ENCODE measurements at regions of chr1 and their contacts with region 1.

Region 1: GRCh38 chr1:50368179-50369012 is 54.8 kb downstream of the DMRTA2 start:
- DNase-seq: no peak
- ATAC-seq: no peak
- H3K4me3 ChIP-seq: no peak overlapping the region
- H3K27ac ChIP-seq: no peak overlapping the region
- H3K4me1 ChIP-seq: no peaks in the 10 kb centered on the region
- H3K27me3 ChIP-seq: no peaks in the 10 kb centered on the region

Region 2: DNA sequence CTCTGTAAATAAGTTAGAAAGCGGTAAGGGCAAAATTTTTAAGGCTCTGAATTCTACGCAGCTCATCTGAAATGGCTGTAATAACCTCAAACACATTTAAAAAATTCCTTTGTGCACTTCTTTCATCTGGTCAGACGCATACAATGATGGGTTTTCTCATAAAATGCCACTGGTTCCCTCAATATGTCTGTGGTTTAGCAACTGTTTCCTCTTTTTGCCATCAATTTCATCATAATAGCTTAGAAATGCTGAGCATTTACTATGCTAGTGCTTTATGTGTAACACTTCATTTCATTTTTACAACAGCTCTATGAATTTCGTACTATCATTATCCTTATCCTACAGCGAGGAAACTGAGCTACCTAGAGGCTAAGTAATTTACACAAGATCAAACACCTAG is 90.1 kb after region 1 on chr1:
- intact Hi-C with region 1: no loop called
- DNase-seq: no peak
- ATAC-seq: no peak
- H3K4me3 ChIP-seq: no peak overlapping the region
- H3K27ac ChIP-seq: no peak overlapping the region
- H3K4me1 ChIP-seq: no peaks in the 10 kb centered on the region
- H3K27me3 ChIP-seq: no peaks in the 10 kb centered on the region

Region 3: DNA sequence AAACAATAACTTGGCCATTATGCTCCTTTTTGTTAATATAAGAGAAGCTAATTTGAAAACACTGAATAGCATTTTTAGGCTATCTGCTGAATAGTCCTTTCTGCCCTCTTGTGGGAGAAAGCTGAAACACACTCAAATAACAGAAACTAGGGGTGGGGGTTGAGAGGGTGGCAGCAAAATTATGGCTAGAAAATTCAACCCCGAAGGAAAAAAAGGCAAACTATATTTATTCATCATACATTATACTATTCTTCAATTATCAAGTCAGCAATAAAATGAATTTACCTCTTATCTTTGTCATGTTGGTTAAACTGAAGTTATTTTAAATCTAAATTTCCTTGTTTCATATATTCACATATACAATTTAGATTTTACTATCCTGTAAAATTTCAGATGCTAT is 335.7 kb after region 1 on chr1:
- intact Hi-C with region 1: loop called in 1 of 2 experiments (anchors 5 kb)
- DNase-seq: no peak
- ATAC-seq: no peak
- H3K4me3 ChIP-seq: no peak overlapping the region
- H3K27ac ChIP-seq: no peak overlapping the region
- H3K4me1 ChIP-seq: peaks cover 0 to 4% of the 10 kb centered on the region in 2 donors
- H3K27me3 ChIP-seq: no peaks in the 10 kb centered on the region